ENCODE measurements at regions of chr1 and their contacts with region 1.

Region 1: GRCh38 chr1:183471743-183472487 is 384 bp upstream of the SMG7 start:
- DNase-seq: peak; percentile 96
- H3K4me3 ChIP-seq: peak overlapping the region; percentile 62 to 91 (median 89)
- H3K27ac ChIP-seq: peak overlapping the region; percentile 90
- H3K4me1 ChIP-seq: peaks cover 19% of the 10 kb centered on the region
- H3K27me3 ChIP-seq: no peaks in the 10 kb centered on the region
- CTCF ChIP-seq: peak in 1 of 2 donors; percentile 11
- POLR2A ChIP-seq: no peak

Region 2: DNA sequence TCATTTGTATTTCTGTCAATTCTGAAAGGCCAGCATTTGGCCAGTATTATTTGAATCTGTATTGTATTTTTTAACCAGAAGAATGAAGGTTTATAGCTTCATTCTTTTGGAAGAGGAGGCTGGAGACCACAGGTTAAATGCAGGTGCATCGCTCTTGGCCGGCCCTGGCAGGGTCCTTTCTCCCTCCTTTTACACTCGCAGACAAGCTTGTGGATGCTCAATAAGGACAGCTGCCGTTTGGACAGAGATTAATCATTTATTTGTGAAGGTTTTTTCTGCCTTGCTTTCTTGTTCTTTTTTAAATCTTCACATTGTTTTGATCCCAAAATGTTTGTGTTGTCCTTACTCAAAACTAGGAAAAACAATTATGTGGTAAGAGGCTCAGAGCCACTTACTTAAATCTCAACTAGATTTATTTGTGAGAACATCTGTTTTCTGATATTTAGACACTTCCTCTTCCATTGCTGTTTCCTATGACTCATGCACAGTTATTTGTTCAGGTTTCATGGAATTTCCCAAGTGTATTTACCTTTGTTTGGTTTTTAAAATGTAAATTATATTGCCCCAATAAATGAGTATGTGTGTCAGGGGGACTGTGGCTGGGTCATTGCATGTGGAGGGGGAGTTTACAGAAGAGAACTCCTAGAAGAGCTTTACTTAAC is 332.5 kb before region 1 on chr1:
- CTCF ChIA-PET with region 1: no interaction called
- POLR2A ChIA-PET with region 1: no interaction called
- dilution Hi-C with region 1: no loop called
- intact Hi-C with region 1: loop called (anchors 5 kb)
- DNase-seq: peak; percentile 96
- H3K4me3 ChIP-seq: peak overlapping the region in 1 of 3 experiments; percentile 19
- H3K27ac ChIP-seq: peak overlapping the region; percentile 94
- H3K4me1 ChIP-seq: peaks cover 25% of the 10 kb centered on the region
- H3K27me3 ChIP-seq: no peaks in the 10 kb centered on the region
- CTCF ChIP-seq: no peak
- POLR2A ChIP-seq: peak; percentile 82

Region 3: GRCh38 chr1:183515018-183515689 is 43.2 kb after region 1 on chr1:
- CTCF ChIA-PET with region 1: no interaction called
- POLR2A ChIA-PET with region 1: no interaction called
- dilution Hi-C with region 1: no loop called
- intact Hi-C with region 1: loop called (anchors 1 kb)
- DNase-seq: peak; percentile 78
- H3K4me3 ChIP-seq: no peak overlapping the region
- H3K27ac ChIP-seq: peak overlapping the region; percentile 65
- H3K4me1 ChIP-seq: peaks cover 34% of the 10 kb centered on the region
- H3K27me3 ChIP-seq: no peaks in the 10 kb centered on the region
- CTCF ChIP-seq: no peak
- POLR2A ChIP-seq: no peak

Region 4: DNA sequence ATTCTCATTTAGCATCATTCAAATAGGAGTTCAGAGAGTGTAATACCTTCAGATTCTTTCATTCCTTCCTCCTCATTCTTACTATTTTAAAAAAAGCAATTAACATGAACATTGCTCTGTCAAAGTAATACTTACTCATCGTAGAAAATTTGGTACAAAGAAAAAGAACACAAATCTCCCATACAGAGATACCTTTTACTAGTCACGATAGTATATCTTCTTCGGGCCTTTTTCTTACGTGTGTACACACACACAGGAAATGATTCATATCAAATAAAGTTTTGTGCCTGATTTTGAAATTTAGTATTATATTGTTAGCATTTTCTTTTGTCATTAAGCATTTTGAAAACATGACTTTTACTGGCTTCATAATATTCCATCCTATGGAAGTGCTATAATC is 65.5 kb after region 1 on chr1:
- CTCF ChIA-PET with region 1: no interaction called
- POLR2A ChIA-PET with region 1: no interaction called
- dilution Hi-C with region 1: no loop called
- intact Hi-C with region 1: no loop called
- DNase-seq: no peak
- H3K4me3 ChIP-seq: no peak overlapping the region
- H3K27ac ChIP-seq: no peak overlapping the region
- H3K4me1 ChIP-seq: no peaks in the 10 kb centered on the region
- H3K27me3 ChIP-seq: no peaks in the 10 kb centered on the region
- CTCF ChIP-seq: no peak
- POLR2A ChIP-seq: no peak

Region 5: DNA sequence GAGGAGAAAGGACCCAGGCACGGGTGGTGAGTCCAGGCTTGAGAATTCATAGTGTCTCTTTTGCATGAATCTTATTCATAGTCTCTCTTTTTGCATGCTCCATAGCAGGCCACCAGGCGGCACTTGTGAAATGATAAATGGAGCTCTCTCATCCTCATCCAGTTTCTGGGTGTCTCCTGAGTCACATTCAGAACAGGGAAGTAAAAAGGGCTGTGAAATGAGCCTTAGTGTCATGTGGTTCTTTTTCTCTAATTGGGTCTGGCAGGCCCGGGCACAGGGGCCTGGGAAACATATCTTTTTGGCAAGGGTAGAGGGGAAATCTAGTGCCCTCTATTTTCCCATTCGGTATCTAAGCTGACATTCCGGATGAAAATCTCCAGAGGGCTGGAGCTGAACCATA is 137.4 kb after region 1 on chr1:
- CTCF ChIA-PET with region 1: no interaction called
- POLR2A ChIA-PET with region 1: no interaction called
- dilution Hi-C with region 1: no loop called
- intact Hi-C with region 1: loop called (anchors 1 kb)
- DNase-seq: peak; percentile 45
- H3K4me3 ChIP-seq: no peak overlapping the region
- H3K27ac ChIP-seq: no peak overlapping the region
- H3K4me1 ChIP-seq: peaks cover 16% of the 10 kb centered on the region
- H3K27me3 ChIP-seq: no peaks in the 10 kb centered on the region
- CTCF ChIP-seq: peak; percentile 47 to 50
- POLR2A ChIP-seq: no peak

Region 6: DNA sequence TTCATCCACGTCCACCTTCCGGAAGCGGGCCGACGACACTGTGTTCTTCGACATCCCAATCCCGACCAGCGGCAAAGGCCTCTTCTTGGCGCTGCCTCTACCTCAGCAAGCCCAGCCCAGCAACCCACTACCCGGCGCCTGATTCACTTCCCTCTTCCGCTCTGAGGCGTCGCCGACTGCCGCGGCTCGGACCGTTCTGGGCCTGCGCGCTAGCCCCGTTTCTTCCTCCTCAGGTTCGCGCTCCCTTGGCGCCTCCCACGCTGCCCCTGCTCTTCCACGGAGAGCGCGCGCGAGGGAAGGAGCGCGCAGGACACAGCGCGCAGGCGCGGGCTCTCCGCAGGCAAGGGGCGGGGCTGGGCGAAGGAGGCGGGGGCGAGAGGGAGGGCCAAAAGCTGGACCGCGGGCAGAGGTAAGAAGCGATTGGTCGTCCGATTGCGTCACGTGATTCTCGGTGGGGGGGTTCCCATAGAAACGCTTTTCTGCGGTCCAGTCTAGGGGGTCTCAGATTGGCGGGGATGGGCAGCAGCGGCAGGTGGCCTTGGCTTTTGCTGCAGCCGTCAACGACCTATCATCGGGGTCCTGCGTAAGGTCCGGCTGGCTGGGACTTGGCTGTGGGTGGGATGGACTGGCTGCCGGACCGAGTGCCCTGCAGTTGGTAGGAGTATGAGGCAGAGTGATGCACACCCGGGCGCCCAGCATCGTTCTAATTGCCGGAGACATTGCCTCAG is 163.9 kb after region 1 on chr1 and contains the start of gene ARPC5:
- CTCF ChIA-PET with region 1: interaction called, 4 read pairs
- POLR2A ChIA-PET with region 1: no interaction called
- dilution Hi-C with region 1: no loop called
- intact Hi-C with region 1: loop called (anchors 1 kb)
- DNase-seq: peak; percentile 100
- H3K4me3 ChIP-seq: peak within 1 kb of the TSS; percentile 93 to 100 (median 99)
- H3K27ac ChIP-seq: peak within 1 kb of the TSS; percentile 67
- H3K4me1 ChIP-seq: peaks cover 28% of the 10 kb centered on the region
- H3K27me3 ChIP-seq: no peaks in the 10 kb centered on the region
- CTCF ChIP-seq: no peak
- POLR2A ChIP-seq: peak; percentile 95
- total RNA-seq, gene ARPC5: 185 and 190 TPM in 2 replicates

Measured in endothelial cell of umbilical vein (primary cell).